AG04449 (cell line): ENCODE measurements at regions of chr2 and their contacts with region 1.

Region 1: DNA sequence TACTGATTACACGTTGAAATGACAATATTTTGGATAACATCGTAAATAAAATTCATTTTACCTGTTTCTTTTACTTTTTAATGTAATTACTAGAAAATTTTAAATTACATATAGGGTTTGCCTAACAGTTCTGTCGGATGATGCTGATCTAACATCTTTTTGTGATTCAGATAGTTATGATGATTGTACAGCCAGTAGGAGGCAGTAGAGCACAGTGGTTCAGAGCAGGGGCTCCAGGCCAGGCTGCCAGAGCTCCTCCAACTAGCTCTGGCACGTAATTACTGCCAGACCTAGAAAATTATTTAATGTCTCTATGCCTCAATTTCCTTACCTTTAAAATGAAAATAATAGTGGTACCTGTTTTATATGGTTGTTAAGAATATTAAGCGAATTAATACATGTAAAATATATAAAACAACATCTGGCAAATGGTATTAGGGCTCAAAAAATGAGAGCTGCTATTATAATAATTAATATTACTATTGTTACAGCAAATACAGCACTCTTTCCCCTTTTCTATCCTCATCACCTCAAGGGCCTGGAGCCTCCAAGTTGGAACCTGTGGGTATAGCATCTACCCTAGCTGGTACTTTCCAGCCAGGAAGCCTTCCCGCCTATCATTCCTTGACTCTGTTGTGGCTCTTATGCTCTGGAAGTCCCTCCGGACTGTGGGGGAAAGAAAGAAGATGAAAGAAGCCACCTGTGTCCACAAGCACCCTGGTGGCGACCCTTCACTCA is 47.7 kb upstream of the PLA2R1 start:
- DNase-seq: peak; percentile 31
- H3K4me3 ChIP-seq: no peak overlapping the region
- CTCF ChIP-seq: peak; percentile 67

Region 2: DNA sequence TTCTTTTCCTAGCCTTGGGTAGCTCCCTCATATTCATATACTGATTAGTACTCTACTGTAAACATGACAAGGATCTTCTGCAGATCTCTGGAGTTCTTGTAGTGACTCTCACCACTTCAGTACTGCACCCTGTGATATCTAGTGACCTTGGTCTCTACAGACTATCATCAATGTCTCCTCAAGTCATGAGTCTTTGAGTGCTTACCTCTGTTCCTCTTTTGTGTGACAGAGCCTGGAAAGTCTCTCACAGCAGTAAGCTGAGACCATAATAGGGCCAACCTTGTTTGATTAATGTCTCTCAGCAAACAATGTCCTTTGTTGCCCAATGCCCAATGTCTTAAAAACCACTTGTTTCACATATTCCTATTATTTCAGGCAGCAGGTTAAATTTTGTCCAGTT is 459.5 kb before region 1 on chr2:
- CTCF ChIA-PET with region 1: no interaction called
- POLR2A ChIA-PET with region 1: no interaction called
- DNase-seq: no peak
- H3K4me3 ChIP-seq: no peak overlapping the region
- CTCF ChIP-seq: no peak

Region 3: GRCh38 chr2:160096409-160096808 is 13.7 kb before region 1 on chr2:
- CTCF ChIA-PET with region 1: interaction called, 27 read pairs
- POLR2A ChIA-PET with region 1: no interaction called
- DNase-seq: no peak
- H3K4me3 ChIP-seq: no peak overlapping the region
- CTCF ChIP-seq: no peak

Region 4: DNA sequence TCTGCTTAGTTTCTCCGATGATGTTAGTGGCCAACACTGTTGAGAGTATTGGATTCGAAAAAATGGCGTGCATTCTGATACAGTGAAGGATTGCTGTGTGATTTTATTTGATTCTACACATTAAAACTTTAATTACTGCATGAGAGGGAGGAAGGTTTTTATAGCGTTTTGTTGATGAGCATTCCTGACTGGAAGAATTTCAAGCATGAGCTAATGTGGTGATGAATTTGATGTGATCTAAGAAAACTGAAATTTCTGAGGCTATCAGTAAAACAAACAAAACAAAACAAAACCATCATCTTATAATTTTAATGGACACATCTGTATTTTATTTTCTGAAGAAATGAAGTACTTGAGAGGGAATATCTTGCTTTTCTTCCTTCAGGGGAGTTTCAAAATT is 30.4 kb after region 1 on chr2:
- CTCF ChIA-PET with region 1: interaction called, 12 read pairs
- POLR2A ChIA-PET with region 1: no interaction called
- DNase-seq: no peak
- H3K4me3 ChIP-seq: no peak overlapping the region
- CTCF ChIP-seq: no peak

Region 5: DNA sequence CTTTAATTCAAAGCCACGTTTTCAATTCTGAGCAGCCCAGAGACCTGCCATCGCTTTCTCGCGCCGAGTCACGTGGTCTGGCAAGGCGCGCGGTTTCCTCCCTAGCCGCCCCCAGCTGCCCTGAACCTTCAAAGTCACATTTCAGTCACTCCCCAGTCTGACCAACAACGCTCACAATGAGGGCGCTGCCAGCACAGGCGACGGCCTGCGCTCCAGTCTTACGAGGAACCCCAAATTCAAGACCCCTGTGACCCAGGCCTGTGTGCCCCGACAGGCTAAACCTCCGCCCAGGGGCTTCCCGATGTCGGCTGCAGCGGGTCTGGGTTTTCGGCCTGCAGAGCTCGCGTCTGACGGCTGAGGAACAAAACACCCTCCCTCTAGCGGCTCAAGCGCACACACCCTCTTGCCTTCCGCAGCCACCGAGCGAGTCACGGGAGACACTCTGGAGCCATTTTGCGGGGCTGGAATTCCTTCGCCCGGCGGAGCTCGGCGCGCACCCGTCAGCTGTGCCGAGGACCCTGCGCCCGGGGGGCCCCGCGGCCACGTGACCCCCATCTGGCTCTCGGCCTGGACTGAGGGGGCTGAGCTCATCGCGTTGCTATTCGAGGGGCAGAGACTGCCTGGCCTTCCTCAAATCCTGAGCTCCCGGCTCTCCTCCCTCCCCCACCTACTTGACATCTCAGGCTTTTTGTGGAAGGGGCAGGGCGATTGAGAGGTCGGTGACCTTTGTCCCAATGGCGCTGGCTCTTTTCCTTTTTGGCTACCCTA is 159.9 kb after region 1 on chr2:
- CTCF ChIA-PET with region 1: interaction called, 35 read pairs
- POLR2A ChIA-PET with region 1: interaction called, 3 read pairs
- DNase-seq: peak; percentile 54
- H3K4me3 ChIP-seq: peak overlapping the region; percentile 52
- CTCF ChIP-seq: peak; percentile 90

Region 6: GRCh38 chr2:160306985-160307384 is 196.9 kb after region 1 on chr2:
- CTCF ChIA-PET with region 1: interaction called, 15 read pairs
- POLR2A ChIA-PET with region 1: no interaction called
- DNase-seq: peak; percentile 84
- H3K4me3 ChIP-seq: no peak overlapping the region
- CTCF ChIP-seq: no peak

Region 7: DNA sequence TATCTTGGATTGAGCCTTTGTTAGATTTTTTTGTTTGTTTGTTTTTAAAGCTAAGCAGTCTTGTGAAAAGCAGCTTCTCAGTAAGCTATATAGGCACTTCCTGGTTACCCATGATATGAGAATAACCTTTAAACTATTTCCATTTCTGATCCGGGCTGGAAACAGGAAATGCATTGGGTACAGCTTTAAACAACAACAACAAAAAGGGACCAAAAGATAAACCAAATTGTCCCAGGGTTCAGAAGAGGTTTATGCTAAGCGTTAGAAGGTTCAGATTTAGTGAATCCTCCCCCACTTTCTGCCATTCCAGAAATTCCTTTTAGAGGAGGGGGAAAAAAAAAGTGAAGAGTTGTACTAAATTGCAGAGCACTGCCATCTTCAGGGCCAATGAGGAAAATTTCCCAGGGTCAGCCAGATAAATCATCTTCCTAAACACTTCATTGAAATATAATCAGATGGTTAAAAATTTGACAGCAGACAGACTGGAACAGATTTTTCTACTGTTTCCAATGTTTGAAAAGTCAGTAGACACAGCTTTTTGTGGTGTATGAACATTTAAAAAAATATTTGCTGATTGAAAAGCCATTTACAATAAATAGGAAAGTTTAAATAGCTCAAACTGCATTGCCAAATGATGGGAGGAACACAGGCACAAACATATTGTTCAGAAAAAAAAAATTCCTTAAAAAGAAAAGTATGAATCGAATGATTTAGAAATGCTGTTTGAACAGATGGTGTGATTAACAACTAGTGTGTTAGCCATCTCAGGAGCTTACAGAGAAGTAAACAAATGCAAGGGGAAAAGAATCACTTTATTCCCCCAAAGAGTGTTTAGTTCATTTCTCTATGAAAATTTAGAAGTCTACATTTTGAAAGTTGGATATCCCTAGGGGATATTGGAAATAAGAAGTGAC is 860.2 kb after region 1 on chr2:
- CTCF ChIA-PET with region 1: interaction called, 19 read pairs
- POLR2A ChIA-PET with region 1: no interaction called
- DNase-seq: no peak
- H3K4me3 ChIP-seq: no peak overlapping the region
- CTCF ChIP-seq: peak; percentile 55

Region 8: DNA sequence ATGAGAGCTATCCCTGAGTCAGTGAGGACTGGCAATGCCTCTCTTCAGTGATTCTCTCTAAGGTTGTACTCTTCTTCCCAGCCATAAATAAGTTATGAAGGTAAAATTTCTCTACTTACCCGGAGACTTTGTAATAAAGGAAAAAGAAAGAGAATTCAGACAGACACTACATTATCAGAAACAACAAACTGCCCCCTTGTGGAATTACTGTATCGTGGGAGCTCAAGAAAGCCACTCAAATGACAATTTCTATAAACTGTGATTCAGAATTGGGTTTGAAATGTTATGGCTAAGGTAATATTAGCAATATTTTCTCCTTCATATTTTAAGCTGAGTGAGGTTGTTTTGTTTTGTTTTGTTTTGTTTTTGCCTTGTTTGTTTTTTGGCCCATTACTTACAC is 894.3 kb after region 1 on chr2:
- CTCF ChIA-PET with region 1: interaction called, 15 read pairs
- POLR2A ChIA-PET with region 1: no interaction called
- DNase-seq: no peak
- H3K4me3 ChIP-seq: no peak overlapping the region
- CTCF ChIP-seq: peak; percentile 31